ENCODE measurements at regions of chr5 and their contacts with region 1.

Region 1: GRCh38 chr5:149485655-149486425 is 65.4 kb downstream of the CSNK1A1 start:
- DNase-seq: no peak
- ATAC-seq: peak; percentile 87

Region 2: GRCh38 chr5:149452007-149452664 is 33.7 kb before region 1 on chr5:
- intact Hi-C with region 1: loop called (anchors 5 kb)
- DNase-seq: no peak
- ATAC-seq: peak; percentile 24